Mammary epithelial cell (primary cell): ENCODE measurements at regions of chr5 and their contacts with region 1.

Region 1: GRCh38 chr5:146466521-146467349 is 19.6 kb downstream of the TCERG1 start:
- DNase-seq: no peak
- H3K4me3 ChIP-seq: no peak overlapping the region
- H3K27ac ChIP-seq: no peak overlapping the region
- H3K4me1 ChIP-seq: no peaks in the 10 kb centered on the region
- H3K27me3 ChIP-seq: no peaks in the 10 kb centered on the region
- CTCF ChIP-seq: peak; percentile 35 to 52

Region 2: DNA sequence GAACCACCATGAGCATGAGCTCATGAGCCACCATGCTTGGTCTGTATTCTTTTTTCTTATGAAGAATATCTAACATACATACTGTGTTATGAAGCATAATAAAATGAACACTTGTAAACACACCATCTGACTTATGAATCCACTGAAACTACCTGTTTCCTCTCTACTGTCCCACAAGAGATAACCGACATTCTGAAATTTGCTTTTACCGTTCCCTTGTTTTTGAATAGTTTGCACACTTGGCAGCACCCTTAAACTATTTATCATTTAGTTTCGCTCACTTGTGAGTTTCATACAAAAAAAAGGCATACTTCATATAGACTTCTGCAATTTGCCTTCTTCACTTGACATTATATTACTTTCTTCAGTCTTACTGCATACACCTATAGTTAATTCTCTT is 293.1 kb before region 1 on chr5:
- CTCF ChIA-PET with region 1: no interaction called
- dilution Hi-C with region 1: no loop called
- in situ Hi-C with region 1: loop called in 1 of 2 experiments (anchors 25 kb)
- intact Hi-C with region 1: no loop called
- DNase-seq: no peak
- H3K4me3 ChIP-seq: no peak overlapping the region
- H3K27ac ChIP-seq: no peak overlapping the region
- H3K4me1 ChIP-seq: no peaks in the 10 kb centered on the region
- H3K27me3 ChIP-seq: no peaks in the 10 kb centered on the region
- CTCF ChIP-seq: no peak